Posterior vena cava (tissue), 2 donors: ENCODE measurements at regions of chr1 and their contacts with region 1.

Region 1: GRCh38 chr1:102693345-102693744 is 415.0 kb downstream of the COL11A1 start:
- DNase-seq: no peak

Region 2: GRCh38 chr1:102640872-102641271 is 52.5 kb before region 1 on chr1:
- intact Hi-C with region 1: loop called in 1 of 2 experiments (anchors 2 kb)
- DNase-seq: no peak